ENCODE measurements at regions of chr6 and their contacts with region 1.

Region 1: GRCh38 chr6:110873981-110874879 is at the start of gene AMD1:
- DNase-seq: peak; percentile 99
- ATAC-seq: peak; percentile 91 to 92
- H3K4me3 ChIP-seq: peak within 1 kb of the TSS; percentile 75
- H3K27ac ChIP-seq: peak within 1 kb of the TSS; percentile 95
- H3K4me1 ChIP-seq: peaks cover 36% of the 10 kb centered on the region
- H3K27me3 ChIP-seq: no peaks in the 10 kb centered on the region
- CTCF ChIP-seq: peak; percentile 7
- total RNA-seq, gene AMD1: 65.8 TPM

Region 2: GRCh38 chr6:110826236-110827129 is 47.7 kb before region 1 on chr6:
- intact Hi-C with region 1: loop called (anchors 10 kb)
- DNase-seq: peak; percentile 69
- ATAC-seq: peak; percentile 88 to 93
- H3K4me3 ChIP-seq: no peak overlapping the region
- H3K27ac ChIP-seq: peak overlapping the region; percentile 76
- H3K4me1 ChIP-seq: peaks cover 27% of the 10 kb centered on the region
- H3K27me3 ChIP-seq: no peaks in the 10 kb centered on the region
- CTCF ChIP-seq: no peak

Region 3: DNA sequence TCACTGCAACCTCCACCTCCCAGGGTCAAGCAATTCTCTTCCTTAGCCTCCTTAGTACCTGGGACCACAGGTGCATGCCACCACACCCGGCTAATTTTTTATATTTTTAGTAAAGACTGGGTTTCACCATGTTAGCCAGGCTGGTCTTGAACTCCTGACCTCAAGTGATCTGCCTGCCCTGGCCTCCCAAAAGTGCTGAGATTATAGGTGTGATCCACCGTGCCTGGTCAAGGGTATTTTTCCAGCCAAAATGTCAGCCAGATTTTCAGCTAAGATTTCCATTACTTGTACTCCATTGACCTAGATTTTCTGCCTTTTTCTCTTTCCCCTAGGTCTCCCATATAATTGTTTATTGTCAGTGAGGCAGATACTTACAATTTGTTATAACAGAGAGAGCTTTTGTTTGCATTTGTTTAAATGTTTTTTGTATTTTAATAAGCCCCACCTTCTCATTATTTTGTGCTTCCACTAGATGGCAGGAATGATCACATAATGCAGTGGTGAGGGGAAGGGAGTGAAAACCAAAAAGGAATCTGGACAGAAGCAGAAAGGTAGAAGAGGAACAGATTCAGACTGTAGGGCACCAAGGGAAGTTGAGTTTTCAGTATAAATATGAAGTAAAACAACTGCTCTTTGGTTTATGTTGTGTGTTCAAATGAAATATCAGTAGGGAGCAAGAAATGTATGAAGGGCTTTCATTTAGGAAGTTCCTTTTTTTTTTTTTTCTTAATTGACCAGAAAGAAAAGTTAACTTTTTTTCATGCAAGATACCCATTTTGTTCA is 137.3 kb after region 1 on chr6:
- intact Hi-C with region 1: no loop called
- DNase-seq: no peak
- ATAC-seq: peak; percentile 62 to 82
- H3K4me3 ChIP-seq: no peak overlapping the region
- H3K27ac ChIP-seq: no peak overlapping the region
- H3K4me1 ChIP-seq: peaks cover 5% of the 10 kb centered on the region
- H3K27me3 ChIP-seq: no peaks in the 10 kb centered on the region
- CTCF ChIP-seq: peak; percentile 49

Region 4: DNA sequence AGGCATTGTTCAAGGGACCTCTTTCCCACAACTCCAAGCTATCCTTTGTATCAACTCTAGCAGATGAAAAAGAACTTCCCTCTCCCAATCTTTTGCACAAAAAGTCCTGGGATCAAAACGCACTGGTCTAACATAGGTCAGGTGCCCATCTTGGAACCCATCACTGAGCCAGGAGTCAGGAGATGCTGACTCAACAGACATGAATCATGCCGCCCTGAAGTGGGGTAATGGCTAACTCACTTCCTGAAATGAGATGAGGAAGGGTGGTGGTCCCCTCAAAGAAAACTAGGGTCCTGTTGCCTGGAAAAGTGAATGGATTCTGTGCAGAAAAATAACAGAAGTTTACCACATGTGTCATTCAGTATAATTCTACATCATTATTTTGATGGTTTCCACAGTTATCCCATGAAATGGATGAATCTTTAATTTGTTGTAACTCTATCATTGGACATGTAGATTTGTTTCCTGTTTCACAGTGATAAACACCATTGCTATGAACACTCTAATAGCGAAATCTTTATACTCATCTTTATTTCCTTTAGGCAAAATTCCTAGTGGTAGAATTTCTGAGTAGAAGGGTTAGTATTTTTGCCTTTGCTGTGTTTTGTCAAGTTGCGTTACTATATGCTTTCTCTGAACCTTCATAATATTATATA is 364.4 kb after region 1 on chr6:
- intact Hi-C with region 1: no loop called
- DNase-seq: no peak
- ATAC-seq: no peak
- H3K4me3 ChIP-seq: no peak overlapping the region
- H3K27ac ChIP-seq: no peak overlapping the region
- H3K4me1 ChIP-seq: no peaks in the 10 kb centered on the region
- H3K27me3 ChIP-seq: no peaks in the 10 kb centered on the region
- CTCF ChIP-seq: no peak